Calu3 (cell line): ENCODE measurements at regions of chr1 and their contacts with region 1.

Region 1: GRCh38 chr1:77219166-77219887 is at the start of gene PIGK:
- DNase-seq: peak; percentile 90
- H3K4me3 Mint-ChIP-seq: peak within 1 kb of the TSS; percentile 89
- H3K27ac Mint-ChIP-seq: peak within 1 kb of the TSS; percentile 70
- H3K4me1 Mint-ChIP-seq: peaks cover 19% of the 10 kb centered on the region
- H3K27me3 Mint-ChIP-seq: no peaks in the 10 kb centered on the region
- CTCF ChIP-seq: no peak
- total RNA-seq, gene PIGK: 37.8 and 41.8 TPM in 2 replicates

Region 2: DNA sequence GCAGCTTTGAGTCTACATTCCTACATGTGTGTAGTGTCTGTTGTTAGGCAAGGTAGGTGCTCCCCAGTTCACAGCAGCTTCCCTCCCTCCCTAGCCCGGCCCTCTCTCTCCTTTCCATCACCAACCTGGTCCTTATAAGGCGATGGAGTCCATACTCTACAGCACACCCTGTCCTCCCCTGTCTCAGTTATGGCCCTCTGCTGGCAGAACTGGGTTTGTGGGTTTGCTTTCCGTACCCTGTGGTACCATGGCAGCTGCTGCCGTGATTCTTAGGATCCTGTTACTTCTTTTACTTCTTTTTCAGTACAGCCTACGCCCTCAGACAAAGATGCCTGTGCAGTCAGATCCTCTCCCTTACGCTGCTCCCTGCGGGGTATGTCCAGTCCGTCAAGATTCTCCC is 94.2 kb after region 1 on chr1:
- CTCF ChIA-PET with region 1: no interaction called
- intact Hi-C with region 1: loop called (anchors 5 kb)
- DNase-seq: peak; percentile 56
- H3K4me3 Mint-ChIP-seq: peak overlapping the region; percentile 4
- H3K27ac Mint-ChIP-seq: no peak overlapping the region
- H3K4me1 Mint-ChIP-seq: no peaks in the 10 kb centered on the region
- H3K27me3 Mint-ChIP-seq: no peaks in the 10 kb centered on the region
- CTCF ChIP-seq: peak; percentile 71

Region 3: DNA sequence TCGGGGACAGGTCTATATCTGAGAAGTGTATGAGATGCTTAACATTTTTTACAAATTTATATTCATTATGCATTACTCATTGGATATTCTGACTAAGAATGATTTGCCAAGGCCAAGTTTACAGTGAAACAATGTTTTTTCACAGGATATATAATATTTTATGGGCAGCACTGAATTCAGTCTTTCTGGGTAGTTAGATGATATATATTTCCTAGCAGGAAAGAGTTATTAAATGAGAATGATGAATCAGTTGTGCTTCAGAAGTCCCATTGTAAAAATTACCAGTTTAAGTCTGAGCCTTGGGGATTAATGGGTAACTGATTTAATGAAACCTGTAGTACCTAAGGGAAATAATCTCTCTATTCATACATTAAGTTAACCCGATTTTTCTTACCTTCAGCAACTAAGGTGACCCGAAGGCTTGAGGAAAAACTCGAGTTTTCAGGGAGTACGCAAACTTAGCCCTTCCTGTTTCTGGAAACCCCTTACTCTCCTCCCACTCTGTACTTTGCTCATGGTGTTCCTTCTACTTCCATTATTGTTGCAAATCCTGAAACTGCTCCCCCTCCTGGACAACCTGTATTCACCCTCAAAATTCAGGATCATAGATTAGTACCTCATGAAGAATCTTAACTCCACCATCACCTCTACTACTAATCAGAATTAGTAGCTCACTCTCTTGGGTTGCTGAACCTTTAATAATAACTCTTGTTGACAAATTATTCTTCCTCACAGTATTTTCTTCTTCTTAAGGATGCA is 197.5 kb after region 1 on chr1:
- CTCF ChIA-PET with region 1: no interaction called
- intact Hi-C with region 1: loop called (anchors 10 kb)
- DNase-seq: peak; percentile 58
- H3K4me3 Mint-ChIP-seq: no peak overlapping the region
- H3K27ac Mint-ChIP-seq: no peak overlapping the region
- H3K4me1 Mint-ChIP-seq: peaks cover 29% of the 10 kb centered on the region
- H3K27me3 Mint-ChIP-seq: no peaks in the 10 kb centered on the region
- CTCF ChIP-seq: peak; percentile 36

Region 4: DNA sequence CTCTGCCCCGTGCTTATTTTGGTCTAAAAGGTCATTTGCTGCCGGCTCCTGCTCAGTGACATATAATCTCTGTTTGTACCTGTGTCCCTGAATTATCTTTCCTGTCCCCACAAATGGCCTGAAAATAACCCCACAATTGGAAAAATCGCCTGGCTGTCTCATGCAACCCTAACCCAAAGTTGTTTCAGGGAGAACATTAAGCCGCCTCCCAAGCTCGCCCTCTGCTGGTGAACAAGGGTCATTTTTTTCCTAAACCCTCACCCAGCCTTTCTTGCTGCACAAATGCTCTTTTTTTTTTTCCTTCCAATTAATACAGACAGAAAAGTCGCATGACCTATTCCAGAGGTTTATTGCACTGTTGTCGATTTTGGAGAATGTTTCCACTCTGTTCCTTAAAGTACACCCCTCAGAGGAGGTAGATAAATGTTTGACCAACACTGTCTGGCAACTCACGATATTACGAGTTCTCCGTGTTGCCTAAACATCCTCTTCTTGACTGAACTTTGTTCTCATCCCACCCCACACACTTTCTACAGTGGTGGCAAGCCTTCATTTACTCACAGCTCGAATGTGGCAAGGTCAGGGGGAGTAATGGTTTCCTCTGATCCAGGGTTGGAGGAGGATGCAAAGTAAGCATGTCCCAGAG is 314.5 kb after region 1 on chr1:
- CTCF ChIA-PET with region 1: no interaction called
- intact Hi-C with region 1: loop called (anchors 10 kb)
- DNase-seq: peak; percentile 68
- H3K4me3 Mint-ChIP-seq: no peak overlapping the region
- H3K27ac Mint-ChIP-seq: peak overlapping the region; percentile 9
- H3K4me1 Mint-ChIP-seq: peaks cover 20% of the 10 kb centered on the region
- H3K27me3 Mint-ChIP-seq: no peaks in the 10 kb centered on the region
- CTCF ChIP-seq: peak; percentile 77

Region 5: GRCh38 chr1:78095593-78095992 is 876.3 kb after region 1 on chr1:
- CTCF ChIA-PET with region 1: no interaction called
- intact Hi-C with region 1: no loop called
- DNase-seq: no peak
- H3K4me3 Mint-ChIP-seq: no peak overlapping the region
- H3K27ac Mint-ChIP-seq: no peak overlapping the region
- H3K4me1 Mint-ChIP-seq: peaks cover 8% of the 10 kb centered on the region
- H3K27me3 Mint-ChIP-seq: no peaks in the 10 kb centered on the region
- CTCF ChIP-seq: no peak